Right cardiac atrium (tissue), 5 donors: ENCODE measurements at regions of chr7 and their contacts with region 1.

Region 1: DNA sequence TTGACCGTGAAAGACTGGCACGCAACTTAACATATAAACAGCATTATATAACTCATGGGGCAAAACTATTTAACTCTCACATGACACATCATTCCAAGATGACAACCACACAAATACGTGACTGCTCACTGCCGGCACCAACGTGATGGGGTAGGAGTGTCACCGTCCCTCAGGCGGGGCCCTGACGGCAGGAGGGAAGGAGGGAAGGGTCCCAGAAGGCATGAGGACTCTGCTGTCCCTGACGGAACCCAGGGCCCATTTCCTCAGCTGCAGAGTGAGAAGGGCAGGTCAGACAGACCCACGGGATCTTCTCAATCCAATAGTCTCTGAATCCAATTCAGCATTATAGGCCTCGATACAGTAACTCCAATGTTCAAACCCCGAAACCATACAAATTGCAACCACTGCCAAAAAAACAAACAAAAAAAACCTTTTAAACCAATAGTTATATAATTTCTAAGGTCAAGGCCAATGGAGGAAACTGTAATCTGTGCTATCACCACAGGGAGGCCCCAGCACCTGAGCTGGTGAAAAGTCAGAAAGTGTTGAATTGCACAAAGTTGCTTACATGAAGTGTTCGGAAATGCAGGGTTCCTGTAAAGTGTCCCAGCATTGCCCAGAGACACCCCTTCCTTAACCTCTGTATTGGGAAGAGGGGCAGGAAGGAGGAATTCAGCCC is 137.4 kb downstream of the TNS3 start:
- DNase-seq: no peak
- ATAC-seq: no peak
- H3K4me3 ChIP-seq: no peak overlapping the region
- H3K27ac ChIP-seq: no peak overlapping the region
- H3K4me1 ChIP-seq: peaks cover 8% of the 10 kb centered on the region
- H3K27me3 ChIP-seq: no peaks in the 10 kb centered on the region

Region 2: GRCh38 chr7:47581806-47582763 is 137.6 kb after region 1 on chr7 and contains the start of gene TNS3:
- intact Hi-C with region 1: loop called in 2 of 4 experiments (anchors 10 kb)
- DNase-seq: peak; percentile 50 to 84 (median 82)
- ATAC-seq: peak; percentile 63 to 68
- H3K4me3 ChIP-seq: peak within 1 kb of the TSS; percentile 65
- H3K27ac ChIP-seq: no peak within 1 kb of the TSS
- H3K4me1 ChIP-seq: peaks cover 13% of the 10 kb centered on the region
- H3K27me3 ChIP-seq: no peaks in the 10 kb centered on the region
- total RNA-seq, gene TNS3: 37.5 to 48.3 (median 42.7) TPM

Region 3: DNA sequence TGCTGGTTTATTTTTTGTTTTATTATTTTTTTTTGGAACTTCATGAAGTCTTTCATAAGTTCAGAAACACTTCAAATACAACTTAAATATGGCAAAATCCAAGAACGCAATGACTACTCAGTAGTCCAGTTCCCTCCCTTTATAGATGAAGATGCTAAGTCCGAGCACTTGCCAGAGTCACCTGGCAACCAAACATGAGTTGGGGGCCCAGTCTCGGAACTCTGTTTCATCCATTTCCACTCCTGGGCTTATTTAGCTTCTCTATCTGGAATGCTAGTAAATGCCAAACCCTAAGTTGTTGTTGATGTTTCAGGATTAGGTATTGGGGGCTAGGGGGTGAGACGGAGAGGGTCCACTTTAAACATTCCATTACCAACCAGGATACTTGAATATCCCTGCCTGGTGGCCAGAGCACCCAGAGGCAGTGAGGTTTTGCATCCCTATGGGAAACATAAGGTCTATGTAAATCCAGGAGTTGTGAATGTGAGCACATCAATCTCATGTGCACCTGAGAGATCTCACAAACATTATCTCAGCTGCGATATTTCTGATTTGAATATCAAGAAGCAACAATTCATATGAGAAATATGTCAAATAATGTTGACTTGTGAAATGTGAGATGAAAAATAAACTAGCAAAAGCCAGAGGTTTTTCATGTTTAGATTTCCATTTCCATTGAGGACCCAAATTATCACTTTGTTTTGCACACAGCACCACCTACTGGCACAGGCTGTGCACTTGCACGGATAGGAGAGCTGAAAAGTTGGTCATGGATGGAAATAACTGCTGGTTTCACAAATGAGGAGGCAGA is 374.5 kb after region 1 on chr7:
- intact Hi-C with region 1: loop called in 3 of 4 experiments (anchors 5 to 10 kb)
- DNase-seq: peak; percentile 65 to 89 (median 75)
- ATAC-seq: peak; percentile 46 to 68
- H3K4me3 ChIP-seq: no peak overlapping the region
- H3K27ac ChIP-seq: no peak overlapping the region
- H3K4me1 ChIP-seq: peaks cover 4% of the 10 kb centered on the region
- H3K27me3 ChIP-seq: no peaks in the 10 kb centered on the region